WTC11 (cell line): ENCODE measurements at regions of chr1 and their contacts with region 1.

Region 1: DNA sequence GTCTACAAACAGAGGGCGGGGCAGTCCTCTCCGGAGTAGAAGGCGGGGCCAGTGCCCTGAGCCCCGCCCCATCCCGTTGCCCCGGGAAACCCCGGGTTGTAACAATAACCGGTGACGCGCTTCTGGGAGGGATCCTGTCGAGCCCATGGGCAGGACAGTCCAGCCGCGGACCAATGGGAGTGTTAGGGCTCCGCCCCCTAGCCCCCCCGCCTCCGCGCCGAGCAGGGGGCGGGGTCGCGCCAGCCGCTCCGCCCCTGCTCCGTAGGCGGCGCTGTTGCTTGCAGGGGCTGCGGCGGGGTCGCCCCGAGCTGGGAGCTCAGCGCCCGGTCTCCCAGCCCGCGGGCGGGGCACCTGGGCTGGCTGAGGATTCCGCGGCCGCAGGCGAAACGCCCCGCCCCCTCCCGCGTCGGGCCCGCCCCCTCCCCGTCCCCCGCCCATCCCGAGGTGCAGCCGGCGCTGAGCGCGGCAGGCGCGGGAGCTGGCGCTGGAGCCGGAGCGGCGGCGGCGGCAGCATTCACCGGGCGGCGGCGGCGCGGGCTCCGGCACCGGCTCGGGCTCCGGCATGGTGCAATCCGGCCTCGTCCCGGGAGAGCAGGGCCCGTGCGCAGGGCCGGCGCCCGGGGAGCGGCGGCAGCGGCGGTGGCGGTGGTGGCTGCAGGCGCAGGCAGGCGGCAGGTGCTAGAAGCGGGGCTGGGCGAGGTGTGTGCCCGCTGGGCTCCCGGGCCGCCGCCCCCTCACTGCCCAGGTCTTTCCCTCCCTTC is at the start of gene FOXO6:
- DNase-seq: peak; percentile 98
- ATAC-seq: peak; percentile 86
- H3K4me3 Mint-ChIP-seq: peak within 1 kb of the TSS; percentile 70
- H3K27ac Mint-ChIP-seq: no peak within 1 kb of the TSS
- H3K4me1 Mint-ChIP-seq: peaks cover 54% of the 10 kb centered on the region
- H3K27me3 Mint-ChIP-seq: peaks cover 63% of the 10 kb centered on the region
- CTCF ChIP-seq: peak; percentile 67
- total RNA-seq, gene FOXO6: 5.4 to 7.4 TPM (median 7.0 TPM) in 3 replicates

Region 2: DNA sequence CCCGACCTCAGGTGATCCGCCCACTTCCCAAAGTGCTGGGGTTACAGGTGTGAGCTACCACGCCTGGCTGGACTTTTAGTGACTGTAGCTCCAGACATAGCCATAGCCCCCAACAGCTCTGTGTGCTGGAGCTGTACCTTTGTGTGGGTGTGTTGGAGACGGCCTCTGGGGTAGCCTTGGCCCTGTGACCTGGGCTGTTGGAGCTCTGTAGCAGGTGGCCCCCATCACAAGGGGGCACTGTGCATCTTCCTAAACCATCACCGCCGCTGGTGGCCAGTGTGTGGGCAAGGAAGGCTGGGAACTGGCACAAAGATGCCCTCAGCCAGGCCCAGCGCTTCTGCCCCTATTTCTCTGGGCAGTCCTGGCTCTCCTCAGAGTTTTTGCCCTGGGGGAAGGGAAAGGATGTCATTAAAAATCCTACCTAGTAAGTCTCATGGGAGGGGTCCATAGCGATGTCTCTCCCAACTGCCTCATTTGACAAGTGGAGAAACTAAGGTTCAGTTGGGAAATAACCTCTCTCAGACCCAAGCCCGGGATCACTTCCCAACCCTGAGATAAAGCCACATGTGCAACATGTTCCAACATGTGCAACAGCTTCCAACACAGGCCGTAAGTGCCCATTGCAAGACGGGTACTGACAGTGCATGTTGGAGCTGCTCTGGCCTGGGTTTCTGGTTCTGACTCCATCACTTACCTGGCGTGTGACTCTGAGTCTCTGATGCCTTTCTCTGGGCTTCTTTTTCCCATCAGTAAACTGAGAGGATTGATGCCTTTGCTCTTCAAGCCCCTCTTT is 38.1 kb before region 1 on chr1:
- CTCF ChIA-PET with region 1: interaction called, 35 read pairs
- POLR2A ChIA-PET with region 1: no interaction called
- DNase-seq: peak; percentile 75
- ATAC-seq: peak; percentile 95
- H3K4me3 Mint-ChIP-seq: no peak overlapping the region
- H3K27ac Mint-ChIP-seq: no peak overlapping the region
- H3K4me1 Mint-ChIP-seq: peaks cover 11% of the 10 kb centered on the region
- H3K27me3 Mint-ChIP-seq: no peaks in the 10 kb centered on the region
- CTCF ChIP-seq: peak; percentile 49

Region 3: GRCh38 chr1:41371630-41372599 is 10.7 kb after region 1 on chr1:
- CTCF ChIA-PET with region 1: interaction called, 43 read pairs
- POLR2A ChIA-PET with region 1: no interaction called
- DNase-seq: peak; percentile 87
- ATAC-seq: peak; percentile 91
- H3K4me3 Mint-ChIP-seq: peak overlapping the region; percentile 62
- H3K27ac Mint-ChIP-seq: peak overlapping the region; percentile 85; the same call in 1 of the 2 replicates
- H3K4me1 Mint-ChIP-seq: peaks cover 68% of the 10 kb centered on the region
- H3K27me3 Mint-ChIP-seq: peaks cover 31% of the 10 kb centered on the region
- CTCF ChIP-seq: no peak

Region 4: GRCh38 chr1:41394959-41395956 is 34.1 kb after region 1 on chr1:
- CTCF ChIA-PET with region 1: interaction called, 106 read pairs
- POLR2A ChIA-PET with region 1: interaction called, 7 read pairs
- DNase-seq: peak; percentile 78
- ATAC-seq: peak; percentile 89
- H3K4me3 Mint-ChIP-seq: peak overlapping the region; percentile 49
- H3K27ac Mint-ChIP-seq: no peak overlapping the region
- H3K4me1 Mint-ChIP-seq: peaks cover 59% of the 10 kb centered on the region
- H3K27me3 Mint-ChIP-seq: peaks cover 6% of the 10 kb centered on the region
- CTCF ChIP-seq: no peak

Region 5: GRCh38 chr1:41423511-41424221 is 62.5 kb after region 1 on chr1:
- CTCF ChIA-PET with region 1: interaction called, 70 read pairs
- POLR2A ChIA-PET with region 1: interaction called, 3 read pairs
- DNase-seq: peak; percentile 66
- ATAC-seq: peak; percentile 52
- H3K4me3 Mint-ChIP-seq: no peak overlapping the region
- H3K27ac Mint-ChIP-seq: no peak overlapping the region
- H3K4me1 Mint-ChIP-seq: peaks cover 5% of the 10 kb centered on the region
- H3K27me3 Mint-ChIP-seq: no peaks in the 10 kb centered on the region
- CTCF ChIP-seq: no peak